ENCODE measurements at regions of chr15 and their contacts with region 1.

Region 1: GRCh38 chr15:31811641-31812040 is 218.7 kb upstream of the CHRNA7 start:
- DNase-seq: peak; percentile 65 to 88 (median 80)
- H3K4me3 ChIP-seq: peak overlapping the region in 3 of 59 donors; percentile 3 to 13 (median 12)
- H3K27ac ChIP-seq: peak overlapping the region; percentile 30 to 98 (median 89)
- H3K27me3 ChIP-seq: no peaks in the 10 kb centered on the region
- CTCF ChIP-seq: peak in 18 of 56 donors; percentile 6 to 47 (median 18)

Region 2: GRCh38 chr15:31857194-31857593 is 45.6 kb after region 1 on chr15:
- intact Hi-C with region 1: loop called in 1 of 2 experiments (anchors 5 kb)
- DNase-seq: no peak
- H3K4me3 ChIP-seq: no peak overlapping the region
- H3K27ac ChIP-seq: peak overlapping the region in 56 of 59 donors; percentile 3 to 99 (median 68)
- H3K27me3 ChIP-seq: no peaks in the 10 kb centered on the region
- CTCF ChIP-seq: peak in 5 of 56 donors; percentile 7 to 18 (median 14)